RWPE1 (cell line): ENCODE measurements at regions of chr5 and their contacts with region 1.

Region 1: DNA sequence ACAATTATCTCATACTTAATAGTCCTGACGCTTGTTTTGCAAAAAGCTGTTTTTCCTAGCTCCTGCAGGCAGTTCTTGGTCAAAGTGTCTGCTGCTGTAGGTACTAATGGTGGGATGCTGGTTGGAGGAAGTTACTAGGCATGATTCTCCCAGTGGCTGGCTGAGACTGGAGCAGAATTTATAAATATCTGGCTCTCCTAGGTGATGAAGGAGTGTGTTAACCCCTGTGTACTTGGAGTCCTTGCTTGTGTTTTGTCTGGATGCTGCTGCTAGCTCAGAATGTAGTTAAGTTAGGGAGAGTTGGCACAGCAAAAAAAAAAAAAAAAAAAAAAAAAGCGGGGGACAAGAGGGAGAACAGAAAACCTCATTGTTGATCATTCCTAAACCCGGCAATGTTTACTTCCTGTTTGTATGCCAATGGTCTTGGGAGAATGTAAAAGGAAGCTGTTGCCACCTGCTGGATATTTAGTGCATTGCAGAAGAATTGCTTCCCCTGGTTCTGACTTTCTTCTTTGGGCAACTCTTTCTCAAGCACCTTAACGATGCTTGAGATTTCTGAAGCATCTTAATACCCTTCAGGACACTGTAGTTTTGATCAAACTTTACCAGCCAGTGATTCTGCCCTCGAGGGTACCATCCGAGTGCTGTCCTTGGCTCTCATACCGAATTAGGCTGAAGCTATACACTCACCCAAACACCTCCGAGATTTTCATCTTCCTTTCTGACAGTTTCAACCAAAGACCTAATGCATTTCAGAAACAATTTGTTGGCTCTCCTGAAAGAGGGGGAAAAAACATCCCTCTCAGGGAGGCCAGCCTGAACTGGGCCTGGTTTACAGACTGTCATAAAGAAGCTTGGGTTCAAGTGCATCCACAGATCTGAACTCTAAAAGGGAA is 71.7 kb upstream of the WWC1 start:
- DNase-seq: peak; percentile 89
- H3K27ac ChIP-seq: no peak overlapping the region
- CTCF ChIP-seq: peak; percentile 96

Region 2: GRCh38 chr5:168047043-168047668 is 172.6 kb before region 1 on chr5:
- CTCF ChIA-PET with region 1: interaction called, 13 read pairs
- POLR2A ChIA-PET with region 1: interaction called, 3 read pairs
- DNase-seq: peak; percentile 88
- H3K27ac ChIP-seq: peak overlapping the region; percentile 34
- CTCF ChIP-seq: peak; percentile 89

Region 3: DNA sequence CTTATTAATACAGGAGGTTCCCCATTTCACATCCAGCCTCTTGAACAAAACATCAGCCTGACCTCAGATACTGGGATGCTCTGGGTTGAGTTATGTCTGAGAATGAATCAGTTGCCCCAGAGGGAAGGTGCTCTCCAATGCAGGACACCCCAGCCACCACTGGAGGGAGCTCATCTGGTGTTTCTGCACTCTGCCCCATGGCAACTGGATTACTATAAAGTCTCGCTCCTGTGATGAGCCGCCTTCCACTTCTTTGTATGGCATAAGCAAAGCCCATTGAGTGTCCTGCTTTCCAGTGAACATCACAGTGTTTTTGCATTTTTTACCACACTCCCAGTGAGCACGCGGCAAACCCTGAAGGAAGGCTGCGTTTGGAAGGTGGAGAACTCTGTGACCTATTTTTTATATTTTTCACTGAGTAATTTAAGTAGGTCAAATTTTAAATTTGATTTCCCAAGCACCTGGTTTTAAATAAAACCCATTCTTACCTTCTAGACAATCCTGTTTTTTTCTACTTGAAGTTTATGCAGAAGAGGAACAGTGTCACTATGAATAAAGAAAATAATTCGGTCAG is 105.2 kb before region 1 on chr5:
- CTCF ChIA-PET with region 1: interaction called, 12 read pairs
- POLR2A ChIA-PET with region 1: no interaction called
- DNase-seq: peak; percentile 74
- H3K27ac ChIP-seq: no peak overlapping the region
- CTCF ChIP-seq: peak; percentile 48